ENCODE measurements at regions of chr14 and their contacts with region 1.

Region 1: GRCh38 chr14:102548616-102549240 is 39.2 kb upstream of the ANKRD9 start:
- DNase-seq: no peak
- H3K4me3 ChIP-seq: no peak overlapping the region
- H3K27ac ChIP-seq: peak overlapping the region; percentile 25
- H3K4me1 ChIP-seq: peaks cover 36% of the 10 kb centered on the region
- H3K27me3 ChIP-seq: no peaks in the 10 kb centered on the region
- CTCF ChIP-seq: no peak

Region 2: GRCh38 chr14:102071283-102071998 is 477.3 kb before region 1 on chr14:
- CTCF ChIA-PET with region 1: interaction called, 12 read pairs
- POLR2A ChIA-PET with region 1: no interaction called
- intact Hi-C with region 1: no loop called
- DNase-seq: peak; percentile 75
- H3K4me3 ChIP-seq: no peak overlapping the region
- H3K27ac ChIP-seq: peak overlapping the region; percentile 9
- H3K4me1 ChIP-seq: peaks cover 5% of the 10 kb centered on the region
- H3K27me3 ChIP-seq: no peaks in the 10 kb centered on the region
- CTCF ChIP-seq: no peak